ENCODE measurements at regions of chr13 and their contacts with region 1.

Region 1: DNA sequence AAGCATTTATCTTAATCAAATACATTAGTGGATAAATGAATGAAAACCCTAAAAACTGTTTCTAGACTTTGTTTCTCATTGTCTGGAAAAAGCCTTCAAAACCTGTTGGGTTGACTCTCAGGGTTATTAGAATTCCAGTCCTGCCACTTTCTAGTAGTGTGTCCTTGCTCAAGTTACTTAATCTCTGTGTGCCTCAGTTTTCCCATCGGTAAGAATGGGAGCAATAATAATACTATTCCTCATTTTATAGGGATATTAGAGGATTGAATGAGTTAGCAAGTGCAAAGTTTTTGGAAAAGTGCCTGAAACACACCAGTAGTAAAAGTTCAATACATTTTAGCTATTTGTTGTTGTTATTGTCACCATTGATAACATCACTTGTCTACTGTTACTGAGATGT is 2.9 kb downstream of the URAD start:
- DNase-seq: no peak
- ATAC-seq: no peak

Region 2: DNA sequence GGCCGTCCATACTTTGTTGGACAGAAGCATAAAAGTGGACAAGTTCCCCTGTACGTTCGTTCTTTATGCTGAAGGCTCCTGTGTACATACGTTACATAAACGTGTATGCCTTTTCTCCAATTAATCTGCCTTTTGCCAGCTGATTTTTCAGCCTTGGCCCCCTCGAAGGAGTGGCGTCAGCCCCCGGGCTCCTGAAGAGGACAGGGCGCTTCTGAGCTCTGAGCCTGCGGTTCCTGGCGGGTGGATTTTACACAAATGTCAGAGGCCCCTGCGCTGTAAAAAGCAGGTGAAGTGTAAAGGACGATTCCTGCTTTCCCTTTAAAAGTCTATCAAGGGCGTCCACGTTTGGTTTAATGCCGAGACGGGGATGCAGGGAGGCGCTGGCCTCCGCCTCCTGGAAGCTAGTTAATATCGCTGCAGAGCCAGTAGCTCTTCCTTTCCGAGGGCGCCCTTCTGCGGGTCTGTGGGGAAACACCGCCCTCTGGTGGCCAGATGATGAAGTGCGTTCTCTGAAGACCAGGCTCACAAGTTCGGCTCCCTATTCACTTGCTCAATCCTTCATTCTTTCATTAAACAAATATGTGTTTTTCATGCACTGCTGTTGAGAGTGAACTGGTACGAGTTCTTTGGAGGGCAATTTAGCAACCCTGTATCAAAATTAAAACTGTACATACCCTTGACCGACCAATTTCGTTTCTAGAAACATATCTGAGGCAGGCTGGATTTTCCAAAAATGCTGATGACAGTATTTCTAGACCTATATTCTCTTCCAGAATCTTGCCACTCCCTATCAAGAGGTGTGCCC is 1287.0 kb before region 1 on chr13:
- intact Hi-C with region 1: no loop called
- DNase-seq: peak; percentile 88
- ATAC-seq: peak; percentile 91

Region 3: GRCh38 chr13:27374650-27375049 is 611.0 kb before region 1 on chr13:
- intact Hi-C with region 1: loop called (anchors 2 kb)
- DNase-seq: no peak
- ATAC-seq: peak; percentile 98

Region 4: GRCh38 chr13:27917121-27917947 is 68.3 kb before region 1 on chr13:
- intact Hi-C with region 1: no loop called
- DNase-seq: no peak
- ATAC-seq: no peak